H1 (cell line): ENCODE measurements at regions of chr2 and their contacts with region 1.

Region 1: DNA sequence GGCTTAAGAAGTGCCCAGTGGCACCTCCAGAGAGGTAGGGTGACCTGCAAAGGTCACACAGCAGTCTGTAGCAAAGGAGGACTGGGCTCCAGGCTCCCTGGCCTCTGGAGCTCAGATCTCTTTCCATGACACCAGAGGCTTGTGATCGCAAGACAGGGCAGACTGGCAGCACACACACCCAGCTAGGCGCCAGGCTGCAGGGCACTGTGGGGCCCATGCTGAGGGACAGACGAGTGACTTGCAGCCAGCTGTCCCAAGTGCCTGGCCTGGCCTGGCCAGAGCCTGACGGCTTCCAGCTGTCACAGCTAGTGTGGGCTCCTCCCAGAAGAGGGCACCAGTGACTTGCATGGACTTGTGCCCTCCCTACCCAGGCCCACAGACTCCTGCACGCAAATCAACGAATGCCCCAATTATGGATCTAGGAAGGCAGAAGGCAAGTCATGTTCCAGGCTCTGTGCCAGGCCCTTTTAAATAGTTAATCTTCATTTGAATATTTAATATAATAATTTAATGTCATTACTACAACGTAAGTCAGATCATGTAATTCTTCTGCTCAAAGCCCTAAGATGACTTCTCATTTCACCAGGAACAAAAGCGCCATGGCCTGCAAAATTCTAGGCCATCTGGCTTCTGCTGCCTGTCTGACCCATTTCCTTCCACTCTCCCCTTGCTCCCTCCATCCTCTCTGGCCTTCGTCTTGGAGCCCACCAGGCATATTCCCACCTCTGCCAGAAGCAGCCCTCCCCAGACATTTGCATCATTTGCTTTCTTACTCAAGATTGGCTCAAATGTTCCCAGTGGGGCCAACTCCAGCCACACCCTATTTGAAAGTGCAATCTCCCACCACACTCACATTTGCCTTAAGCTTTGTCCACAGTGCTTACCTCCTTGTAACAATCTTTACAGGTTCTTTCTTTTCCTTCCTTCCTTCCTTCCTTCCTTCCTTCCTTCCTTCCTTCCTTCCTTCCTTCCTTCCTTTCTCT is 3.7 kb upstream of the SPEG start:
- DNase-seq: no peak
- H3K4me3 ChIP-seq: no peak overlapping the region
- H3K27ac ChIP-seq: no peak overlapping the region
- H3K4me1 ChIP-seq: peaks cover 0 to 13% (median 7%) of the 10 kb centered on the region in 4 experiments; a peak in 5 of 7 replicates
- H3K27me3 ChIP-seq: peaks cover 0 to 13% (median 10%) of the 10 kb centered on the region in 4 experiments; a peak in 6 of 7 replicates
- CTCF ChIP-seq: peak; percentile 49 to 50 (median 49)
- EP300 ChIP-seq: no peak
- POLR2A ChIP-seq: no peak
- RAD21 ChIP-seq: peak; percentile 44 to 63

Region 2: DNA sequence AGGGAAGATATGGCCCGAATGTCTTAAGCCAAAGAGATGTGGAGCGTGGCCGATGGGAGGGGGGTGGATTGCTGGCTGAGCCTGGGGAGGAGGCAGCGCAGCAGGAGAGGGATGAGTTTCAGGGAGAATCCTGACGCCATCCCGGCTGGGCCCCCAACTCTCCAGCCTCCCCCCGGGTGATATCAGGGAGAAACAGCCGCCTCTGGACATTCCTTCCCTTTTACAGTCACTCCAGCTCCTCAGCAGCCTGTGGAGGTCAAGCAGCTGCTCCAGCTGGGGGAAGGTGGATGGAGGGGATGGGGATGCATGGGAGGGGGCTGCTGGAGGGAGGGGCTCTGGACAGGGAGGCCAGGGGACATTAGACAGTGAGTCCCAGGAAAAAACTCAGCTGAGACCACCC is 22.3 kb before region 1 on chr2:
- CTCF ChIA-PET with region 1: interaction called, 186 read pairs
- POLR2A ChIA-PET with region 1: interaction called, 30 read pairs
- DNase-seq: no peak
- H3K4me3 ChIP-seq: no peak overlapping the region
- H3K27ac ChIP-seq: no peak overlapping the region
- H3K4me1 ChIP-seq: peaks cover 0 to 9% (median 4%) of the 10 kb centered on the region in 4 experiments; a peak in 6 of 7 replicates
- H3K27me3 ChIP-seq: peaks cover 0 to 2% (median 0%) of the 10 kb centered on the region in 4 experiments; a peak in 1 of 7 replicates
- CTCF ChIP-seq: no peak
- EP300 ChIP-seq: no peak
- POLR2A ChIP-seq: no peak
- RAD21 ChIP-seq: no peak

Region 3: DNA sequence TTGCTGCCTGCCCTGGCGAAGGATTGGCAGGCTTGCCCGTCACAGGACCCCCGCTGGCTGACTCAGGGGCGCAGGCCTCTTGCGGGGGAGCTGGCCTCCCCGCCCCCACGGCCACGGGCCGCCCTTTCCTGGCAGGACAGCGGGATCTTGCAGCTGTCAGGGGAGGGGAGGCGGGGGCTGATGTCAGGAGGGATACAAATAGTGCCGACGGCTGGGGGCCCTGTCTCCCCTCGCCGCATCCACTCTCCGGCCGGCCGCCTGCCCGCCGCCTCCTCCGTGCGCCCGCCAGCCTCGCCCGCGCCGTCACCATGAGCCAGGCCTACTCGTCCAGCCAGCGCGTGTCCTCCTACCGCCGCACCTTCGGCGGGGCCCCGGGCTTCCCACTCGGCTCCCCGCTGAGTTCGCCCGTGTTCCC is 12.8 kb before region 1 on chr2 and contains the start of gene DES:
- CTCF ChIA-PET with region 1: interaction called, 7,248 read pairs
- POLR2A ChIA-PET with region 1: interaction called, 8 read pairs
- DNase-seq: no peak
- H3K4me3 ChIP-seq: peak within 1 kb of the TSS in 2 of 4 experiments; percentile 2 to 51; a peak in 3 of 8 replicates
- H3K27ac ChIP-seq: no peak within 1 kb of the TSS
- H3K4me1 ChIP-seq: peaks cover 8 to 26% (median 15%) of the 10 kb centered on the region in 4 experiments
- H3K27me3 ChIP-seq: peaks cover 15 to 36% (median 29%) of the 10 kb centered on the region in 4 experiments
- CTCF ChIP-seq: no peak
- EP300 ChIP-seq: no peak
- POLR2A ChIP-seq: no peak
- RAD21 ChIP-seq: no peak
- total RNA-seq, gene DES: 1.5 and 1.8 TPM in 2 replicates

Region 4: DNA sequence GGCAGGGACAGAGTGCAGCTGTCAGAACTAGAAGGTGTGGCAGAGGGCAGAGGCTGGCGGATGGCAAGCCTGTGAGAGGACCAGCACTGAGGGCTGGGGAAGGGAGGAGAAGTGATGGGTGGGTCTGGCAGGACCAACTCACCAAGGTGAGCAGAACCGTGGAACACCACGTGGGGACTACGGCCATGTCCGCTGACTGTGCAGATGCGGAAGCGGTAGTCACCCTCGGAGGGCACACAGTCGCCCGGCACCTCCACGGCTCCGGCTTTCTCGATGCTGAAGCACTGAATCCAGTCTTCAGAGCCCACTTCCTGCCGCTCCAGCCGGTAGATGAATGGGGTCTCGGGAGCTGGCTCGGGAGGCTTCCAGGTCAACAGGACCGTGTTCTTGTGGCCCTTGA is 136.2 kb after region 1 on chr2:
- CTCF ChIA-PET with region 1: no interaction called
- POLR2A ChIA-PET with region 1: no interaction called
- DNase-seq: no peak
- H3K4me3 ChIP-seq: no peak overlapping the region
- H3K27ac ChIP-seq: no peak overlapping the region
- H3K4me1 ChIP-seq: peaks cover 6 to 53% (median 43%) of the 10 kb centered on the region in 4 experiments
- H3K27me3 ChIP-seq: peaks cover 0 to 2% (median 0%) of the 10 kb centered on the region in 4 experiments; a peak in 1 of 7 replicates
- CTCF ChIP-seq: no peak
- EP300 ChIP-seq: no peak
- POLR2A ChIP-seq: no peak; a peak in 1 of 3 replicates
- RAD21 ChIP-seq: no peak